ENCODE measurements at regions of chr1 and their contacts with region 1.

Region 1: DNA sequence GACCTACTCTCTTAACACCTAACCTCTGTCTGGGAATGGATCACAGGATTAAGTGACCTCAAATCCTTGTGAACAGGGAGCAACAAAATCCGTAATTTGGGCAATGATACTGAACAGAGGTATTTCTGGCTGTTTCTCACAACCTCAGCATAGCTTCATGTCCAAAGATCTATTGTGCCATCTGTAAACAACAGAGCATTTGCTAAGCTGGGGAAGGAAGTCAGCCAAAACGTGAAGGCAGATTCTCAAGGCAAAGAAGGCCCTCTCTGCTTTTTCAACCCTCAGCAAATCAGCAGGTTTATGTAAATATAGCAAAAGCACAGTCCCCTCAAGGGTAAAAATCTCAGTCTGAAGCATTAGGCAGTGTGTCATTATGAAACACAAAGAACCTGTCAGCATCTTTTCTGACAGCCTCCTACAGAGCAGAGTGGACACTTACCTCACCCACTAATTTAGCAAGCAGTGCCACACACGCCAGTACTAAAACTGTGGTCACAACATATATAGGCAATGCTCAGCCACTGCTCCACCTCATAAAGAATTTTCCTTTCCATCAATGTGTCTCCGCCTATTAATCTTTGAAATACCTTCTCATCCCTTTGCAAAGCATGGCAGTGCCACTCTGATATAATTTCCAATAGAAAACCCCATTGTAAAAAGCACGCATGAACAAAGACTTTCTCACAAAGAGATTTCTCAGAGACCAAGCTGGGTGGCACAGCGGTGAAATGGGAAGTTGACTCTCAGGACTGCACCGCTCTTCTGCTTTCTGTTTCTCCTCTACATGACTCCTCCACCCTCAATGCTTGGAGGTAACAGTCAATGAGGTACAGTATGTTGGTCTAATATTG is 188.0 kb downstream of the RERE start:
- DNase-seq: peak; percentile 77
- ATAC-seq: peak; percentile 85
- H3K4me3 ChIP-seq: peak overlapping the region in 3 of 5 experiments; percentile 6 to 22 (median 9)
- H3K4me3 Mint-ChIP-seq: peak overlapping the region; percentile 72
- H3K27ac ChIP-seq: peak overlapping the region; percentile 71 to 95
- H3K27ac Mint-ChIP-seq: peak overlapping the region; percentile 87
- H3K4me1 ChIP-seq: peaks cover 73 to 95% of the 10 kb centered on the region in 2 donors
- H3K4me1 Mint-ChIP-seq: peaks cover 84% of the 10 kb centered on the region
- H3K27me3 ChIP-seq: no peaks in the 10 kb centered on the region
- H3K27me3 Mint-ChIP-seq: no peaks in the 10 kb centered on the region
- CTCF ChIP-seq: no peak

Region 2: DNA sequence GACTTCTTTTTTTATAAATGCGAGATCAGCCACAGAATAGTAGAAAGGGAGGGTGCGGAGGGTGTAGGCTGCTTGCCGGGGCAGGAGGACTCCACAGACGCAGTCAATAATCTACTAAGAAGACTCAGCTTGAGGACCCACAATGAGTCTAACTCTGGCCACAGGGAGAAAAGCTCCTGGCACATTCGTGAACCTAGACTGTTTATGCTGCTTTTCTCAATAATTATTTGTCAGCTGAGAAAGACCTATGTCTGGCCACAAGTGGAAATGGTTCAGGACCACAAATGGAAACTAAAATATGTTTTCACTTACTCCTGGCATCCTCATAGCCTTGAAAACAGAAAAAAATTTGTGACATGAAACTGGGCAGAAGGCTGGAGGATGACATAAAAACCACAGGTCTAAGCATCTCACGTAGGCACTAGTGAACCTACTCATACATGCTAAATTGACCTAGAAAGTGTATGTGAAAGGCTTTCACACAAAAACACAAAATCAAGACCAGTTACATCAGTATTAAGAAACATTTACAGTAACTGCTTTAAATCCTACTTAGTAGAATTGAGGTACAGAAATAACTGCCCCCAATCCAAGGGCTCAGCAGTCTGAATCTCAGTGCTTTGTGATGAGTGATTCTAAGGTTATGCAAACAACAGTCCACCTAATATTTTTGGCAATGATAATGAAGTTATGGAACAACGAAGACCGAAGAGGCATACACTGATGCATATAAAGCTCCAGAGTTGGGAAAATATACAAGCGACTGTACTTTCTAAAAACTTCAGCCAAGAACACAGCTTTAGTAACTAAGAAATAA is 152.1 kb before region 1 on chr1:
- CTCF ChIA-PET with region 1: no interaction called
- POLR2A ChIA-PET with region 1: no interaction called
- intact Hi-C with region 1: no loop called
- DNase-seq: no peak
- ATAC-seq: no peak
- H3K4me3 ChIP-seq: no peak overlapping the region
- H3K4me3 Mint-ChIP-seq: no peak overlapping the region
- H3K27ac ChIP-seq: peak overlapping the region in 1 of 2 donors; percentile 10
- H3K27ac Mint-ChIP-seq: no peak overlapping the region
- H3K4me1 ChIP-seq: peaks cover 17 to 20% of the 10 kb centered on the region in 2 donors
- H3K4me1 Mint-ChIP-seq: peaks cover 45% of the 10 kb centered on the region
- H3K27me3 ChIP-seq: no peaks in the 10 kb centered on the region
- H3K27me3 Mint-ChIP-seq: no peaks in the 10 kb centered on the region
- CTCF ChIP-seq: no peak

Region 3: GRCh38 chr1:8643542-8644536 is 14.4 kb after region 1 on chr1:
- CTCF ChIA-PET with region 1: no interaction called
- POLR2A ChIA-PET with region 1: interaction called, 3 read pairs
- intact Hi-C with region 1: loop called (anchors 1 kb)
- DNase-seq: peak; percentile 82
- ATAC-seq: peak; percentile 99
- H3K4me3 ChIP-seq: no peak overlapping the region
- H3K4me3 Mint-ChIP-seq: peak overlapping the region; percentile 54
- H3K27ac ChIP-seq: peak overlapping the region; percentile 65 to 78
- H3K27ac Mint-ChIP-seq: peak overlapping the region; percentile 84
- H3K4me1 ChIP-seq: peaks cover 36 to 40% of the 10 kb centered on the region in 2 donors
- H3K4me1 Mint-ChIP-seq: peaks cover 61% of the 10 kb centered on the region
- H3K27me3 ChIP-seq: no peaks in the 10 kb centered on the region
- H3K27me3 Mint-ChIP-seq: no peaks in the 10 kb centered on the region
- CTCF ChIP-seq: no peak

Region 4: DNA sequence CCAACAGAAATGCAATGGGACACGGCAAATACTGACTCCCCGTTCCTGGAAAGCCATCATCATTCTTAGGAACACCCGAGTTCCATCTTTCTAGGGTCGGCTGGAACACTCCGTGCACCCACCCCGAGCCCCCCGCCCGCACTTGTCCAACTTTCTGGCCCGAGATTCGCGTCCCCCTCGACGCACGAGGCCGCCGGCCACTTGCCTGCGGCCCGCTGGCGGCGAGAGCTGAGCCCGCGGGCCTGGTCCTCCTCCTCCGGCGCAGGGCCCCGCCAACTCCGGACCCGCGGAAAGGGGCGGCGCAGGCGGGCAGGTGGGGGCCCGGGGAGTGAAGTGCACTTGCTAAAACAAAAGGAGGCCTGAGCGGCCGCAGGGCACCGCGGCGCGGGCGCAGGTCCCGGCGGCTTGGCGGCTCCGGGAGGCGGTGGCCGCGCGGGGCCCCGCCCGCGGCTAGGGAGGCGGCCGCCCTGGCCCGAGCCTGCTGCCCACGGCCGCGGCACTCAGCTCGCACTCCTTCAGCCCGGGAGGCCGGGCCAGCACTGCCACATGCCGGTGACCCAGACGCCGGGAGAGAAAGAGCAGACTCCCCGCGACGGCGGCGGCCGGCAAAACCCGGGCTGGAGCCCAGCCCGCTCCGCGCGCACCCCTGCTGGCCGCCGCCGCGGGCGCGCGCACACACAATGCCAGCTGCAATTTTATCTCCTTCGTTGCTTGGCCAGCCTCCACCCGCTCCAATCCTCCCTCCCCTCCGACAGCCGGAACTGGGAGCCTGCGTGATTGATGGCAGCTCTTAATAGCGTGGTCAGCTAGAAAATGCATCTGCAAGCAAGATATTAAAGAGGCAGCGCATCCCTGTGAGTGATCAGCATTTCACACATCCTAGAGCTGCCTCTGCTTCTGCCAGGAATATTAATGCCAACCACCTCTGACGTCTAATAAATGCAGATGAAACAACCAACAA is 73.7 kb after region 1 on chr1:
- CTCF ChIA-PET with region 1: interaction called, 3 read pairs
- POLR2A ChIA-PET with region 1: no interaction called
- intact Hi-C with region 1: loop called (anchors 5 kb)
- DNase-seq: peak; percentile 88
- ATAC-seq: peak; percentile 72
- H3K4me3 ChIP-seq: peak overlapping the region; percentile 60 to 81 (median 63)
- H3K4me3 Mint-ChIP-seq: peak overlapping the region; percentile 93
- H3K27ac ChIP-seq: peak overlapping the region; percentile 54 to 77
- H3K27ac Mint-ChIP-seq: peak overlapping the region; percentile 93
- H3K4me1 ChIP-seq: peaks cover 32 to 39% of the 10 kb centered on the region in 2 donors
- H3K4me1 Mint-ChIP-seq: peaks cover 61% of the 10 kb centered on the region
- H3K27me3 ChIP-seq: no peaks in the 10 kb centered on the region
- H3K27me3 Mint-ChIP-seq: no peaks in the 10 kb centered on the region
- CTCF ChIP-seq: no peak

Region 5: DNA sequence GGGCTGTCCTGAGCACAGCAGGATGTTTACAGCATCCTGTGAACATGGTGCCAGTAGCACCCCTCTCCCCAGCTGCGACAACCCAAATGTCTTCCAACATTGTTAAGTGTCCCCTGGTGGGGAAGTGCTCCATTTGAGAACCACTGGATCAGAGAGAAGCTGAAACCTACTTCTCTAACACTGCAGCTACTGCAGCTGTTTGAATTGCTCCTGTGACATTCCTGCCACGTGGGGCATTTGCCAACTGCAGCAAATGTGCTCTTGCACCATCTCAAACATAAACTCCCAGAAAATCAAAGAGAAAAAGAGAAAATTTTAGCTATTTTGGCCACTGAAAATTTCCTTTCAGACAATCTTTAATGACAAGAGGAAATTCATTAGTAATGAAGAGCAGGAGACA is 429.0 kb after region 1 on chr1:
- CTCF ChIA-PET with region 1: no interaction called
- POLR2A ChIA-PET with region 1: no interaction called
- intact Hi-C with region 1: no loop called
- DNase-seq: no peak
- ATAC-seq: no peak
- H3K4me3 ChIP-seq: no peak overlapping the region
- H3K4me3 Mint-ChIP-seq: no peak overlapping the region
- H3K27ac ChIP-seq: no peak overlapping the region
- H3K27ac Mint-ChIP-seq: peak overlapping the region; percentile 26
- H3K4me1 ChIP-seq: peaks cover 0 to 7% of the 10 kb centered on the region in 2 donors
- H3K4me1 Mint-ChIP-seq: peaks cover 17% of the 10 kb centered on the region
- H3K27me3 ChIP-seq: no peaks in the 10 kb centered on the region
- H3K27me3 Mint-ChIP-seq: no peaks in the 10 kb centered on the region
- CTCF ChIP-seq: no peak

Measured in B cell (primary cell).